ENCODE measurements at regions of chr2 and their contacts with region 1.

Region 1: GRCh38 chr2:85561317-85561979 is at the start of gene GGCX:
- DNase-seq: peak; percentile 82 to 96 (median 92)
- ATAC-seq: peak; percentile 92 to 94
- H3K4me3 Mint-ChIP-seq: peak within 1 kb of the TSS; percentile 91 to 99 (median 97)
- H3K27ac Mint-ChIP-seq: peak within 1 kb of the TSS; percentile 93 to 99 (median 97)
- H3K4me1 Mint-ChIP-seq: peaks cover 9 to 37% (median 33%) of the 10 kb centered on the region in 4 donors
- H3K27me3 Mint-ChIP-seq: no peaks in the 10 kb centered on the region
- polyA plus RNA-seq, gene GGCX: 10.4 to 14.6 (median 14.0) TPM

Region 2: DNA sequence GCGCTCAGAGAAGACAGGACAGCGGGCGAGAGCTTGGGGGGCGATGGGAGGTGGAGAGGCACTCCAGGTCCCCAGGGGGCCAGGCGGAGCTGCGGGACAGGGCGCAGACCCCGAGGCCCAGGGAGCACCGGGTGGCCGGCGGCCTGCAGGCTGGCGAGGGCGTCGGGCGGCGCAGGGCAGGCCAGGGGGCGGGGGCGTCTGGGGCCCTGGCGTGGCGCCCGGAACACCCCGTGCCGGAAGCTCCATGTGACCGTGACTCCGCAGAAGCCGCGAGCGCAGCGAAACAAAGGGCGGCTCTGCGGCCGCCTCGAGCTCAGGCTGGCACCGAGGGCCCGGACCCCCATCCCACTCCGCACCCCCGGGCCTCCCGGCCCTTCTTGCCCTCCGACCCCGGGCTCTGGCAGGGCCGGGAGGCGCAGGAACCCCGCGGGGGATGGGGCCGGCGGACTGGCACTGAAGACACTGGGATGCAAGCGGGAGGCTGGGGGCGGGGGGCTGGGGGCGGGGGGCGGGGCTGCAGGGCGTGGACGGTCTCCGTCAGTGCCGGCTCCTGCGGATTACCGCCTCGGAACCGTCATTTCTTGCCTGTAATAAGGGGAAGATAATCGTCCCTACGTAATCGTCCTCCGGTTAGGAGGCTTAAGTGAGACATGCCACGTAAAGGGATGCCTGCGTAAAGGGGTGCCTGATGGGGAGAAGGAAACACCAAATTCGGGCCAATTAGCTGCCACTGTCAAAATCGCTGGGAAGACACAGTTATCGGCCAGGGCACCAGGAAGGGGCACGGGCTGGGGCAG is 123.8 kb before region 1 on chr2:
- POLR2A ChIA-PET with region 1: interaction called, 12 read pairs
- DNase-seq: peak; percentile 57 to 83 (median 72)
- ATAC-seq: peak; percentile 88 to 92
- H3K4me3 Mint-ChIP-seq: peak overlapping the region; percentile 78 to 98 (median 89)
- H3K27ac Mint-ChIP-seq: peak overlapping the region; percentile 89 to 97 (median 95)
- H3K4me1 Mint-ChIP-seq: peaks cover 13 to 43% (median 41%) of the 10 kb centered on the region in 4 donors
- H3K27me3 Mint-ChIP-seq: no peaks in the 10 kb centered on the region

Region 3: GRCh38 chr2:85538486-85539360 is 22.7 kb before region 1 on chr2 and contains the start of gene MAT2A:
- POLR2A ChIA-PET with region 1: interaction called, 144 read pairs
- DNase-seq: peak; percentile 71 to 91 (median 86)
- ATAC-seq: peak; percentile 74 to 76
- H3K4me3 Mint-ChIP-seq: peak within 1 kb of the TSS; percentile 91 to 96 (median 95)
- H3K27ac Mint-ChIP-seq: peak within 1 kb of the TSS; percentile 90 to 98 (median 95)
- H3K4me1 Mint-ChIP-seq: peaks cover 21 to 50% (median 40%) of the 10 kb centered on the region in 4 donors
- H3K27me3 Mint-ChIP-seq: no peaks in the 10 kb centered on the region
- polyA plus RNA-seq, gene MAT2A: 68.1 to 103 (median 73.0) TPM

Region 4: DNA sequence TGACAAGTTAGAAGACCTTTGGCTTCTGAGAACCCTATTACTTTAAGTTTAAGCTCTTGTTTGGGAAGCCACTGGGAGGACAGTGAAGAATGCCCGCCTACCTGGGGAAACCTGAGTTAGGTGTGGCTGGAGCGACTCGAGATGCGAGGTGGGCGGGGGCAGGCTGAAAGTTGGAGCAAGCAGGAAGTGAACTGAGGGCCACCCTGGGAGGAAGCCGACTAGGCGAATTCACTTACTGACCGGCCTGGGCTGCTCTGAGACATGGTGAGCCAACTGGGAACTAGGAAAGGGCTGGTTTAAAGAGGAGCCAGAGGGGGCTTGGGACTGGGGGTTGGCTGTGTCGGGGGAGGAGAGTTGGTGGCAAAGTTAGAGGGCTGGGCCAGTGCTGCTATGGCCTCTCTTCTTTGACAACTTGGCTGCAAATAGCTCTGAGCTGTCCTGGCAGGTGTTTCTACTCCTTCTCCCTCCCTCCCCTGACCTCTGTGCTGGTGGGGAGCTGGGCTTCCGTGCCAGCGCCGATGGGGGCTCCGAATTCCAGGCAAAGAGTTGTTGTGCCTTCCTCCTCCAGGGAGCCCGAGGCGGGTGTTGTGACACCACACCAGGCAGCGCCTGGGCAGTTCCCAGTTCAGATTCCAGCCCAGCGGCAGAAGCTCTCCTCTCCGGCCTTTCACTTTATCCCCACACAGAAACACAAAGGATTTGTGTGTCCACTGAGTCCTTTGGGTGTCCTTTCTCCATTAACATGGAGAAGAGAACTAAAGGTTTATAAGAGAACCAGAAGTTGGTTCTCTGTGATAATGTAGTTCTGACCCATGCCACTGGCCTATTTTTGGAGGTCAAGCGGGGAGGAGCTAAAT is 16.2 kb after region 1 on chr2 and contains the start of gene VAMP8:
- POLR2A ChIA-PET with region 1: interaction called, 15 read pairs
- DNase-seq: peak; percentile 41 to 80 (median 49)
- ATAC-seq: peak; percentile 81 to 86
- H3K4me3 Mint-ChIP-seq: peak within 1 kb of the TSS; percentile 88 to 98 (median 94)
- H3K27ac Mint-ChIP-seq: peak within 1 kb of the TSS; percentile 88 to 98 (median 93)
- H3K4me1 Mint-ChIP-seq: peaks cover 23 to 43% (median 43%) of the 10 kb centered on the region in 4 donors
- H3K27me3 Mint-ChIP-seq: no peaks in the 10 kb centered on the region
- polyA plus RNA-seq, gene VAMP8: 321 to 405 (median 373) TPM

Region 5: DNA sequence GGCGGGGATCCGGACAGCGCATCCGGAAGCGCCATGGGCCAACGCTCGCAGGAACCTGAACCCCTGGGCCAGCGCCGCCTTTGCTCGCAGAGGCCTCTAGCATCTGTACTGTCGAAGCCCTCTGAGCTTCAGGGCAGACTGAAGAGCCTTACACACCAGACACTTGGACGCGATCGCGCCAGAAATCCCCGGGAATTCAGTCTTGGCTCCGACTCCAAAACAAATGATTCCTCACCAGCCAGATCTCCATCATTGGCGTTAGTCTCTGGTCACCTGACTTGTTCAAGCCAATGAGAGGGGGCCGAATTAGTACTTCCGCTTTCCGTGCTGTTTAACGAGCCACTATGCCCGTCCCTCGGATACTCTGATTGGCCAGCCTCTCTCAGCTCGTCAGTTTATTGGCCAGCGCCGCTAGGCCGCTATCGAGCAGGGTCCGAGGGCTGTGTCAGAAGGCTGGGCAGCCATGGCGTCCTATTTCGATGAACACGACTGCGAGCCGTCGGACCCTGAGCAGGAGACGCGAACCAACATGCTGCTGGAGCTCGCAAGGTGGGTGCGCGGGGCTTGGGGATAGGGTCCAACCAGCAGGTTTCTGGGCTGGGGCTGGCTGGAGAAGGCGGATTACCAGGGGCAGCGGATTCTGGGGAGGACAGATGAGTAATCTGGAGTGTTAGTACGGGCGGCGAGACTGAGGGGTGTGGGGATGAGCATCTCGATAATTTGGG is 34.0 kb after region 1 on chr2 and contains the start of gene RNF181:
- POLR2A ChIA-PET with region 1: interaction called, 28 read pairs
- DNase-seq: peak; percentile 73 to 96 (median 90)
- ATAC-seq: peak; percentile 98 to 99
- H3K4me3 Mint-ChIP-seq: peak within 1 kb of the TSS; percentile 96 to 100 (median 98)
- H3K27ac Mint-ChIP-seq: peak within 1 kb of the TSS; percentile 96 to 100 (median 98)
- H3K4me1 Mint-ChIP-seq: peaks cover 19 to 51% (median 36%) of the 10 kb centered on the region in 4 donors
- H3K27me3 Mint-ChIP-seq: no peaks in the 10 kb centered on the region
- polyA plus RNA-seq, gene RNF181: 165 to 206 (median 173) TPM

Region 6: DNA sequence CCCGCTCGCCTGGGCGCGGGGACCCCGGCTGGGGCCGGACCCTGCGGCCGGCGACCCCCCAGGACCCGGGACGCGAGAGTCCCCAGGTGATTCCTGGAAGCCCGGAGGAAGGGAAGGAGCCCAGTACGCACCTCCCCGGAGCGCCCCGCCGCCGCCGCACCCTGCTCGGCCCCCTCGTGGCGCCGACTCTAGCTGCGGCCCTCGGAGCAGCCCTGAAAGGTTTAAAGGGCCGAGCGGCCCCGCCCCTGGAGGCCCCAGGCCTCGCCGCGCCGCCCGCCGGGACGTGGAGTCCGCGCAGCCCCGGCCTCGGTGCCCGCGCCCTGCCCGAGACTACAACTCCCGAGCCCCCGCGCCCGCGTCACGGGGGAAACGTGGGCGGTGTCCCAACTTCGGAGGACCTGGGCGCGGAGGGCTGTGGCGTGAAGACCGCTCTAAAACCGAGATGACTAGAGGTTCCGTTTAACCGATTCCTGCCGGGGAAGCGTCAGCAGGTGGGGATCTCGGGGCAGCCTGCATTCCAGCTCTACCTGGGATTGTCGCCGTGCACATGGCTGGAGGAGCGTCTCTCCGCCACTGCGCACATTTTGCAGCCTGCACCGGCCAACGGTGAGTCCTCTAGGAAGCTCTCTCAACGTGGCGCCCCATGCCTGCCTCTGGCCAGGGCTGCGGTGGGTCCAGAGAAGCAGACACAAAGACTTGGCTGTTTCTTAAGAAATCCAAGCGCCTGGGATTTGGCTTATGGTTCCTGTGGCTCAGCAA is 41.2 kb after region 1 on chr2 and contains the start of gene TMEM150A:
- POLR2A ChIA-PET with region 1: interaction called, 17 read pairs
- DNase-seq: peak; percentile 76 to 91 (median 82)
- ATAC-seq: peak; percentile 91 to 92
- H3K4me3 Mint-ChIP-seq: peak within 1 kb of the TSS; percentile 85 to 95 (median 90)
- H3K27ac Mint-ChIP-seq: peak within 1 kb of the TSS; percentile 63 to 94 (median 90)
- H3K4me1 Mint-ChIP-seq: peaks cover 18 to 47% (median 34%) of the 10 kb centered on the region in 4 donors
- H3K27me3 Mint-ChIP-seq: no peaks in the 10 kb centered on the region
- polyA plus RNA-seq, gene TMEM150A: 11.6 to 15.1 (median 13.8) TPM

Region 7: DNA sequence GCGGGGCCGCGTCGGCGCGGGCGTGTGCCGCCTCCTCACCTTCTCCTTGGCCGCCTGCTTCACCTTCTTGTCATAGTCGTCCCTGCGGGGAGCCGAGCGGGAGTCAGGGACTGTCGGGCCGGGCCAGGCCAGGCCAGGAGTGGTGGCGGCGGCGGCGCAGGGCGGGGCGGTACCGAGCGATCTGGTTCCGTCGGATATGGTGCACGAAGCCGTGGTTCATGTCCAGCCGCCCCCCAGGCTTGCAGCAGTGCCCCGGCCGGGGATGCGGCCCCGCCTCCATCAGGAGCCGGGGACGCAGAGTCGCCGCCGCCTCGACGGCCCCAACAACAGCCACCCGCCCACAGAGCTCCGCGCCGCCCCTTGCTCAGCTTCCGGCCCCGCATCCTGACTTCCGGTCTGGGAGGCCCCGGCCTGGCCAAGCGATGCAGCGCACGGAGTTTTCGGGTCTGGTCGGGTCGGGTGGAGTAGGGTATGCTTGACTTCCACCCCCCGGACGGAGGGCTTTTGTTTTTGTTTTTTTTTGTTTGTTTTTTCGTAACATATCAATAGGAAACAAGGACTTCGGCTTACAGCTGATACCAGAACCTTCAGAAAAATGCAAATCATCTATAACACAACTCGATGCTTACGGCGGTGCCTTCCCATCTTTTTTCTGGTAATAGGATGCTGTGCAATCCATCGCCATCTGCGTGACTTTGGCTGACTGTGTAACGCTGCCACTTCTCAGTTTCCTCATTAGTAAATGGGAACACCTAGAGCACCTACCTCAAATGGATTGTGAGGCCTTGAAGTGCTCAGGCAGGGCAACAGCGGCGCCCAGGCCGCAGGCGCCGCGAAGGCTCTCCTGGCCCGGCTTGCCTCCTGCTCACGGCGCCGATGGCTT is 50.5 kb after region 1 on chr2 and contains the start of gene C2orf68:
- POLR2A ChIA-PET with region 1: interaction called, 12 read pairs
- DNase-seq: peak; percentile 65 to 89 (median 77)
- ATAC-seq: peak; percentile 60 to 63
- H3K4me3 Mint-ChIP-seq: peak within 1 kb of the TSS; percentile 91 to 99 (median 98)
- H3K27ac Mint-ChIP-seq: peak within 1 kb of the TSS; percentile 72 to 98 (median 95)
- H3K4me1 Mint-ChIP-seq: peaks cover 12 to 42% (median 32%) of the 10 kb centered on the region in 4 donors
- H3K27me3 Mint-ChIP-seq: no peaks in the 10 kb centered on the region
- polyA plus RNA-seq, gene C2orf68: 15.7 to 21.1 (median 20.4) TPM

Region 8: GRCh38 chr2:85718009-85718391 is 156.6 kb after region 1 on chr2:
- POLR2A ChIA-PET with region 1: no interaction called
- DNase-seq: no peak
- ATAC-seq: no peak
- H3K4me3 Mint-ChIP-seq: no peak overlapping the region
- H3K27ac Mint-ChIP-seq: no peak overlapping the region
- H3K4me1 Mint-ChIP-seq: peaks cover 4 to 21% (median 5%) of the 10 kb centered on the region in 4 donors
- H3K27me3 Mint-ChIP-seq: peaks cover 0 to 4% (median 0%) of the 10 kb centered on the region in 5 donors